ENCODE measurements at regions of chr3 and their contacts with region 1.

Region 1: DNA sequence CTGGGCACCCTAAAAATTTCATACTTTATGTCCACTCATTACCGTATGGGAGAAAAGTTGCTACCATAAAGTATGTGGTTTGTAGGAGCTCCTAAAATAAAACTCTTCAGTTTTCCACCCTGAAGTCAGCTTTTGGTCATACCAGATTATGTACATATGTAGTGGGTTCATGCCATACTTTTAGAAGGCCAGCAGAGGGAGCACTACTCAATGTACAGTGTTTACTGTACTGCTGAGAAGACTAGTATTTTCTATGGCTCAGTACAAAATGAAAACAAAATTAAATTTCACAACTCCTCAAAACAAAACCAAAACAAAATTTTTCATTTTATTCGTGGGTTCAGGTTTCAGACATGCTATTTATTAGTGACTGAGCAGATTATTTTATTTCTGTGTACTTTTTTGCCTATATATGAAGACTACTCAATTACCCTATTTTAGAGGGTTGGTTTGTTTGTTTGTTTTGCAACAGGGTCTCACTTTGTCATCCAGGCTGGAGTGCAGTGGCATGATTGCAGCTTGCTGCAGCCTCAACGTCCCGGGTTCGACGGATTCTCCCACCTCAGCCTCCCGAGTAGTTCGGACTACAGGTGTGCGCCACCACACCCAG is 24.3 kb downstream of the NXPE3 start:
- DNase-seq: peak in 11 of 14 experiments; percentile 15 to 89 (median 43)
- ATAC-seq: peak; percentile 100
- H3K4me3 ChIP-seq: no peak overlapping the region
- H3K4me3 Mint-ChIP-seq: no peak overlapping the region
- H3K27ac ChIP-seq: no peak overlapping the region
- H3K27ac Mint-ChIP-seq: peak overlapping the region; percentile 76
- H3K4me1 ChIP-seq: peaks cover 8% of the 10 kb centered on the region
- H3K4me1 Mint-ChIP-seq: peaks cover 49% of the 10 kb centered on the region
- H3K27me3 ChIP-seq: no peaks in the 10 kb centered on the region
- H3K27me3 Mint-ChIP-seq: no peaks in the 10 kb centered on the region
- CTCF ChIP-seq: peak; percentile 93

Region 2: GRCh38 chr3:101695779-101696372 is 107.4 kb before region 1 on chr3:
- CTCF ChIA-PET with region 1: no interaction called
- POLR2A ChIA-PET with region 1: no interaction called
- intact Hi-C with region 1: loop called (anchors 5 kb)
- DNase-seq: peak in 5 of 14 experiments; percentile 34 to 80 (median 72)
- ATAC-seq: no peak
- H3K4me3 ChIP-seq: no peak overlapping the region
- H3K4me3 Mint-ChIP-seq: no peak overlapping the region
- H3K27ac ChIP-seq: no peak overlapping the region
- H3K27ac Mint-ChIP-seq: no peak overlapping the region
- H3K4me1 ChIP-seq: no peaks in the 10 kb centered on the region
- H3K4me1 Mint-ChIP-seq: no peaks in the 10 kb centered on the region
- H3K27me3 ChIP-seq: no peaks in the 10 kb centered on the region
- H3K27me3 Mint-ChIP-seq: no peaks in the 10 kb centered on the region
- CTCF ChIP-seq: peak; percentile 93

Region 3: GRCh38 chr3:101791778-101792177 is 11.5 kb before region 1 on chr3:
- CTCF ChIA-PET with region 1: interaction called, 13 read pairs
- POLR2A ChIA-PET with region 1: interaction called, 8 read pairs
- intact Hi-C with region 1: no loop called
- DNase-seq: no peak
- ATAC-seq: no peak
- H3K4me3 ChIP-seq: no peak overlapping the region
- H3K4me3 Mint-ChIP-seq: no peak overlapping the region
- H3K27ac ChIP-seq: no peak overlapping the region
- H3K27ac Mint-ChIP-seq: peak overlapping the region; percentile 47
- H3K4me1 ChIP-seq: peaks cover 17% of the 10 kb centered on the region
- H3K4me1 Mint-ChIP-seq: peaks cover 83% of the 10 kb centered on the region
- H3K27me3 ChIP-seq: no peaks in the 10 kb centered on the region
- H3K27me3 Mint-ChIP-seq: no peaks in the 10 kb centered on the region
- CTCF ChIP-seq: no peak

Region 4: GRCh38 chr3:102229062-102229655 is 425.9 kb after region 1 on chr3:
- CTCF ChIA-PET with region 1: interaction called, 33 read pairs
- POLR2A ChIA-PET with region 1: interaction called, 10 read pairs
- intact Hi-C with region 1: no loop called
- DNase-seq: peak; percentile 51 to 88 (median 72)
- ATAC-seq: peak; percentile 92
- H3K4me3 ChIP-seq: no peak overlapping the region
- H3K4me3 Mint-ChIP-seq: no peak overlapping the region
- H3K27ac ChIP-seq: no peak overlapping the region
- H3K27ac Mint-ChIP-seq: no peak overlapping the region
- H3K4me1 ChIP-seq: peaks cover 3% of the 10 kb centered on the region
- H3K4me1 Mint-ChIP-seq: peaks cover 17% of the 10 kb centered on the region
- H3K27me3 ChIP-seq: no peaks in the 10 kb centered on the region
- H3K27me3 Mint-ChIP-seq: no peaks in the 10 kb centered on the region
- CTCF ChIP-seq: peak; percentile 93